ENCODE measurements at regions of chr7 and their contacts with region 1.

Region 1: DNA sequence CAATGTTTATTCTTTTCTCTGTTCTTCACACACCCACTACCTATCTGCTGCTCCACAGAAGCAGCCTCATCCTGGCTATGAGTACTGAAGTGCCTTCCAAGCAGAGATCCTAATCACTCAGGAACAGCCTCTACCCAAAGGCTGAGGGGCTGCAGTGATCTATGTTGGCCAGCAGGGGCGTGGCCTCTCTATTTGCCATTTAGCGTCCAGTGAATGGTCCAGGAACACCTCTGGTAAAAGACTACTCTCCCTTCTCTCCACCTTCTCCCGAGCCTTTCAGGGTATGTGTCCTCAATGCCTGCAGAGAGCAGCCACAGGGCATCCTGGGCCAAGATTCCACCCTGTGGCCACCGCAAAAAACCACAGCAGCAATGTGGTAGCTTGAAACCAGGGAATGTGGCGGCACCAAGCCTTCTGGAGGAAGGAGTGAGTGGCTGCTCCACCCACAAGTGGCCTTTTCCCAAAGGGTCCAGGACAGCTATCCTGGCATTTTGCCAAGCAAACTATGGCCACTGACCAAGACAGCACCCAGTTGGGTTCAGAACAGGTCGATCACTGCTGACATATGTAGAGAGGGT is 70.9 kb downstream of the SYPL1 start:
- DNase-seq: peak; percentile 72
- ATAC-seq: peak; percentile 71
- H3K4me3 Mint-ChIP-seq: no peak overlapping the region
- H3K27ac Mint-ChIP-seq: no peak overlapping the region
- H3K4me1 Mint-ChIP-seq: peaks cover 23% of the 10 kb centered on the region
- H3K27me3 Mint-ChIP-seq: no peaks in the 10 kb centered on the region; the same call in 1 of the 2 replicates
- CTCF ChIP-seq: peak; percentile 97

Region 2: GRCh38 chr7:105643384-105643783 is 397.8 kb before region 1 on chr7:
- CTCF ChIA-PET with region 1: interaction called, 11 read pairs
- POLR2A ChIA-PET with region 1: no interaction called
- DNase-seq: peak; percentile 82
- ATAC-seq: peak; percentile 74
- H3K4me3 Mint-ChIP-seq: no peak overlapping the region
- H3K27ac Mint-ChIP-seq: peak overlapping the region; percentile 69
- H3K4me1 Mint-ChIP-seq: peaks cover 73% of the 10 kb centered on the region
- H3K27me3 Mint-ChIP-seq: no peaks in the 10 kb centered on the region
- CTCF ChIP-seq: no peak

Region 3: GRCh38 chr7:106108991-106109390 is 67.8 kb after region 1 on chr7:
- CTCF ChIA-PET with region 1: no interaction called
- POLR2A ChIA-PET with region 1: no interaction called
- DNase-seq: no peak
- ATAC-seq: no peak
- H3K4me3 Mint-ChIP-seq: peak overlapping the region; percentile 56
- H3K27ac Mint-ChIP-seq: peak overlapping the region; percentile 67
- H3K4me1 Mint-ChIP-seq: peaks cover 40% of the 10 kb centered on the region
- H3K27me3 Mint-ChIP-seq: no peaks in the 10 kb centered on the region
- CTCF ChIP-seq: no peak